A549 (cell line): ENCODE measurements at regions of chr3 and their contacts with region 1.

Region 1: DNA sequence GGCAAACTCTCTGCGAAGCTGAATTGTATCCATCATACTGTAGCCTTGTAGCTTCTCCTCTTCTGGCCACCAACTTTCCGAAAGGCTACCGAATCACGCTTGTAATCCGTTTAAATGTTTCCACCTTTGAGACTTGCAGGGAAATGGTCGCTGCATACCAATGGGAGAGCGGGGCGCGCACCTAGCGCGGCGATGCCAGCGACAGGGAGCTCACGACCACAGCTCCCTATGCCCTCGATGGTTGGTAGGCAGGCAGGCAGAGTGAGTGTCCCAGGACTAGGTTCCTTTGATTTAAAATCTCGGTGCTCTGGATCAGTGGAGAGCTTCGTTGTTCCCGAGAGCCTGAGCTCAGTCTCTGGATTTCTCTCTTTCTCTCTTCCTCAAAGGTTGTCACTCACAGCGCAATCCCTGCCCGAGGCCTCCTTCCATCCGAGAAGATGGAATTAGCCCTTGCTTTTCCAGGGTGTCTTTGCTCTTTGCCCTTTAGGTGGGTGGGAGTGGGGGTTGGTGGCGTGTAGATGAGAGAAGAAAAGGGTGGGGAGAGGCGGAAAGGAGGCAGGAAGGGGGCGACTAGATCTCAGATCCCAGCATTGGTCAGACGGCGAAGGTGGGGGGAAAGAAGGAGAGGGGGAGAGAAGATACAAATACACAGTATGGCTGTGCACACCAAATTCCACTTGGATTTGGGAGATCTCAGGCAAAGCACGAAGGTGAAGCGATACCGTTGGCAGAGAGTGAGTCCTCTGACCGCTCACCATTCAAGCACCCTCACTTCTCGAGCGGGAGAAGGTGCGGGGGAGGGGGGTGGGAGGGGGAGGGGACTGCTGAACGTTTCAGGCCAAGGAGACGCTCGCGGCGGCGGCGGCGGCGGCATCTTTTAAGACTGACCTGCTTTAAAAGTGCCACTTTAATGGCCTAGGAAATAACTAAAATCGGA is at the start of gene SLITRK3:
- DNase-seq: no peak
- ATAC-seq: peak; percentile 66
- H3K4me3 ChIP-seq: peak within 1 kb of the TSS; percentile 48
- H3K27ac ChIP-seq: no peak within 1 kb of the TSS
- H3K4me1 ChIP-seq: peaks cover 18% of the 10 kb centered on the region; the same call in 1 of the 3 replicates
- CTCF ChIP-seq: no peak
- EP300 ChIP-seq: no peak
- POLR2A ChIP-seq: no peak
- RAD21 ChIP-seq: no peak
- polyA plus RNA-seq, gene SLITRK3: not detected in 2 replicates

Region 2: DNA sequence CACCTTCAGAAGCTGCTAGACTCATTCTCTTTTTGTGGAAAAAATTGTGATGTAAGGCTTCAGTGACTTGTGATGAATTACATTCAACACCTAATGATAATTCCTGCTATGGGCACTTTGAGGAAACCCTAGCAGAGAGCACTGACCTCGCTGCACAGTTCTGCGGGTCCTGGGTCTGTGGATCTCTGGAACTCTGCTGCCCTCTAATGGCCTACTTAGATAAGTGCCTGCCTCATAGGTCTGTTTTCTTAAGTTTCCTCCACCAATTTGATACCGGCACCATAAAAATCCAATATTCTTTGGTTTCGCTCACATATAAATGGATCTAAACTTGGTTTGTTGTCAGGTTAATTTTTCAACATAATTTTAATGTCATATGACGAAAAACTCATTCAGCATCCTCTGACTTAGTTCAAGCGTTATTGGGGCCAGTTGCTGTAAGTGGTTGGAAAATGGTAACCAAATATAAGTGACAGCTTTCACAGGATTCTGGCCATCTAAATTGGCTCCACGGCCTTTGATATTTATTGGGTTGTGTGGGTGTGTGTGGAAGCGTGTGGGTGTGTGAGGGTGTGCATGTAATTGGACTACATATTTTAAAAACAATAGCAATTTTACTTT is 10.1 kb before region 1 on chr3:
- CTCF ChIA-PET with region 1: interaction called, 10 read pairs
- POLR2A ChIA-PET with region 1: no interaction called
- DNase-seq: peak in 1 of 2 experiments; percentile 67
- ATAC-seq: peak; percentile 92 to 98
- H3K4me3 ChIP-seq: no peak overlapping the region
- H3K27ac ChIP-seq: no peak overlapping the region
- H3K4me1 ChIP-seq: no peaks in the 10 kb centered on the region
- CTCF ChIP-seq: peak; percentile 85
- EP300 ChIP-seq: no peak
- POLR2A ChIP-seq: no peak
- RAD21 ChIP-seq: peak; percentile 92 to 93

Region 3: DNA sequence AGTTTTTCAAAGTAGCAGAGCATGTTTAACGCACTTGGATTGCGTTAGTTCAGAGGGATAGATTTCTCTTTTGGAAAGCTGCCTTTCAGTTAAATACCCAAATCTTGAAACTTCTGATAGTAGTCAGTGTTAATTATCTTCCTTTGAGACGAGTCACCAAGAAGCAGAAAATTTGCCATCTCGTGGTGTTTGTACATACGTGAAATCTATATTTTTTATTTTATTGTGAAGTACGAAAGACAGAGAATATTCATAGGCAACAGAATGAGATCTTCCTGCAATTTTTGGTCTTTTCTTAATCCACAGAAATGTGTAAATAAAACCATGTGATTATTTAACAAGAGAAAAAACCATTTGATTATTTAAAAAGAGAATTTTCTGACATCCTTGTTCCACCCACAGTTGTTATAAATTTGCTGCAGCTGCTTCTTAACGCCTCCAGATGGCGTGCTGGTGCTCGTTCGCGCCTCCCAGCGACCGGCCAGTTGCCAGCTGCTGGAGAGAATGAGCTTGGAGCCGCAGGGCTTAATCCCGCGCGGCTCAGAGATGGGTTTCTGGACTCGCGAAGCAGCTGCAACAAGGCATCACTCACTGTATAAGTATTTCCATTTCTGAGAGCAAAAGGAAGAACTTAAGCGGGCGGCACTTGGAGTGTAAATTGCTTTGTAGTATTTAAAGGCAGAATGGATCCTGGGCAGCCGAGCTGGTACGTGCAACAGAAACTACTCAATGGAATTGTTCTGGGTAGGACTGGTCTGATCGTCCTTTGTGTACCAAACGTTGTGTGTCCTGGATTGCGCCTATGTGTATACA is 10.8 kb after region 1 on chr3:
- CTCF ChIA-PET with region 1: interaction called, 10 read pairs
- POLR2A ChIA-PET with region 1: no interaction called
- DNase-seq: peak; percentile 53 to 80
- ATAC-seq: peak; percentile 90 to 98
- H3K4me3 ChIP-seq: peak overlapping the region; percentile 42
- H3K27ac ChIP-seq: no peak overlapping the region
- H3K4me1 ChIP-seq: no peaks in the 10 kb centered on the region
- CTCF ChIP-seq: peak; percentile 91
- EP300 ChIP-seq: no peak
- POLR2A ChIP-seq: no peak
- RAD21 ChIP-seq: peak; percentile 66 to 69

Region 4: GRCh38 chr3:166263455-166263854 is 1067.5 kb after region 1 on chr3:
- CTCF ChIA-PET with region 1: no interaction called
- POLR2A ChIA-PET with region 1: no interaction called
- DNase-seq: no peak
- ATAC-seq: no peak
- H3K4me3 ChIP-seq: no peak overlapping the region
- H3K27ac ChIP-seq: no peak overlapping the region
- H3K4me1 ChIP-seq: no peaks in the 10 kb centered on the region
- CTCF ChIP-seq: no peak
- EP300 ChIP-seq: no peak
- POLR2A ChIP-seq: no peak
- RAD21 ChIP-seq: no peak